Breast epithelium (tissue), 4 donors: ENCODE measurements at regions of chr20 and their contacts with region 1.

Region 1: GRCh38 chr20:57089691-57090150 is 176.7 kb downstream of the BMP7 start:
- DNase-seq: peak; percentile 57 to 70
- H3K4me3 ChIP-seq: no peak overlapping the region
- H3K27ac ChIP-seq: no peak overlapping the region
- H3K4me1 ChIP-seq: no peaks in the 10 kb centered on the region
- H3K27me3 ChIP-seq: peaks cover 0 to 12% of the 10 kb centered on the region in 2 donors
- CTCF ChIP-seq: peak; percentile 59 to 93 (median 83)
- POLR2A ChIP-seq: no peak

Region 2: GRCh38 chr20:57133926-57134650 is 44.4 kb after region 1 on chr20:
- intact Hi-C with region 1: no loop called
- DNase-seq: no peak
- H3K4me3 ChIP-seq: no peak overlapping the region
- H3K27ac ChIP-seq: no peak overlapping the region
- H3K4me1 ChIP-seq: no peaks in the 10 kb centered on the region
- H3K27me3 ChIP-seq: no peaks in the 10 kb centered on the region
- CTCF ChIP-seq: no peak
- POLR2A ChIP-seq: no peak

Region 3: GRCh38 chr20:57346477-57346876 is 256.8 kb after region 1 on chr20:
- intact Hi-C with region 1: loop called (anchors 10 kb)
- DNase-seq: peak; percentile 64 to 75
- H3K4me3 ChIP-seq: no peak overlapping the region
- H3K27ac ChIP-seq: no peak overlapping the region
- H3K4me1 ChIP-seq: no peaks in the 10 kb centered on the region
- H3K27me3 ChIP-seq: no peaks in the 10 kb centered on the region
- CTCF ChIP-seq: peak; percentile 54 to 80 (median 74)
- POLR2A ChIP-seq: no peak

Region 4: GRCh38 chr20:58467572-58468527 is 1378.1 kb after region 1 on chr20:
- intact Hi-C with region 1: loop called (anchors 5 kb)
- DNase-seq: no peak
- H3K4me3 ChIP-seq: no peak overlapping the region
- H3K27ac ChIP-seq: no peak overlapping the region
- H3K4me1 ChIP-seq: no peaks in the 10 kb centered on the region
- H3K27me3 ChIP-seq: no peaks in the 10 kb centered on the region
- CTCF ChIP-seq: no peak
- POLR2A ChIP-seq: no peak